GM23248 (cell line): ENCODE measurements at regions of chr3 and their contacts with region 1.

Region 1: DNA sequence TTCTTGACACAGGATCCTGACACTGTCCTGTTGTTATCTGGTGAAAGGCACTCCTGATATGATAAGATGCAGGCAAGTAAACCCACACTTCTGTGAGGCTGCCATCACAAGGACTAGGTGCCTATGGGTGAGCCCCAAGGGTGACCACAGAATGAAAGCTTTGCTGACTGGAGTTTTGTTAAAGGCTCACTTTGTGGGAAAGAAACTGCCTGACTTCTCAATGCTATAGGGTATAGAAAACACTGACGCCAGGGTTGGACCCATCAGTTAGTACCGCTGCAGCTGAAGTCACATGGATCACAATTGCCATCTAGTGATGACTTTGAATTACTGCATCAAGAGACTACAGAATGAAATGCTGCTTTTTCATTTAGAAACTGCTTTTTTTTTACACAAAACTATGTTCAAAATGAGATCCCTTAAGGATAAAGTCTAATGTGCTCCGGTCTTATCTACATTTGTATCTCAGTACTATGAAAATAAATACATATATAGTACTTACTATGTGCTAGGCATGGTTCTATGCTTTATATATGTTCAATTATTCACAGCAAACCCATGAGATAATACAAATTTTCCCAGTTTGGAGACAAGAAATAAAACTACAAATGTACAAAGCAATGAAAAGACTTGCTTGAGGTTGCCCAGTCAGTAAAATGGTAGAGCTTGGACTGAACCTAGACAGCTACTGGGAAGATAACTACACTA is 64.2 kb upstream of the CMSS1 start:
- DNase-seq: peak; percentile 86
- H3K4me3 ChIP-seq: no peak overlapping the region
- H3K27ac ChIP-seq: no peak overlapping the region
- H3K4me1 ChIP-seq: peaks cover 28% of the 10 kb centered on the region
- H3K27me3 ChIP-seq: no peaks in the 10 kb centered on the region

Region 2: GRCh38 chr3:98824256-98824655 is 929.2 kb before region 1 on chr3:
- in situ Hi-C with region 1: loop called (anchors 10 kb)
- DNase-seq: no peak
- H3K4me3 ChIP-seq: no peak overlapping the region
- H3K27ac ChIP-seq: no peak overlapping the region
- H3K4me1 ChIP-seq: peaks cover 13% of the 10 kb centered on the region
- H3K27me3 ChIP-seq: no peaks in the 10 kb centered on the region

Region 3: DNA sequence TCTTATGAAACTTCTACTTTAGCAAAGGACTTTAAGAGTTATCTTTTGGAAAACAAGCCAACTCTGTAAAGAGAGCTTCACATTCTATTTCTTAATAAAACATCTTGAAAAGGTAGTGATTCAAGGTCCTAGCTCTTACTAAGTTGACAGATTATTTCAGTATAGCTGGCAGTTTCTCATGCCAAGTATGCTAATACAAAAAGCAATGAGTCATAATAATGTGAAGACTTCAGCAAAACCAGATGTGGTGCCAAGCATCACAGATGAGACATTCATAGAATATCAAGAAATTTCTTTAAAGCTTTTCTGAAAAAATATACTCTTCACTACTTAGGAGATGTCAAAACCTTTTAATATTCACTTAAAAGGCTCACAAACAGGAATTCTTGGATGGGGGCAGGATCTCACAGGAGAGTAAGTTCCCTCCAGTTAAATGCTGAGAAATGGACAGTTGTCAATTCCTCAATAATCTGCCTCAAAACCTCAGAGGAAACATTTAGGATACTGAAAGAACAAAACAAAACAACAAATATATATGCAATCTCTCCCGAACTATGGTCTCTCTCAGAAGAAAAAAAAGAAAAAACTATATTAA is 897.5 kb before region 1 on chr3:
- in situ Hi-C with region 1: no loop called
- DNase-seq: peak; percentile 98
- H3K4me3 ChIP-seq: peak overlapping the region; percentile 38
- H3K27ac ChIP-seq: peak overlapping the region; percentile 66
- H3K4me1 ChIP-seq: peaks cover 37% of the 10 kb centered on the region
- H3K27me3 ChIP-seq: no peaks in the 10 kb centered on the region

Region 4: GRCh38 chr3:99049164-99049563 is 704.3 kb before region 1 on chr3:
- in situ Hi-C with region 1: loop called (anchors 25 kb)
- DNase-seq: no peak
- H3K4me3 ChIP-seq: no peak overlapping the region
- H3K27ac ChIP-seq: no peak overlapping the region
- H3K4me1 ChIP-seq: no peaks in the 10 kb centered on the region
- H3K27me3 ChIP-seq: no peaks in the 10 kb centered on the region